ENCODE measurements at regions of chr3 and their contacts with region 1.

Region 1: DNA sequence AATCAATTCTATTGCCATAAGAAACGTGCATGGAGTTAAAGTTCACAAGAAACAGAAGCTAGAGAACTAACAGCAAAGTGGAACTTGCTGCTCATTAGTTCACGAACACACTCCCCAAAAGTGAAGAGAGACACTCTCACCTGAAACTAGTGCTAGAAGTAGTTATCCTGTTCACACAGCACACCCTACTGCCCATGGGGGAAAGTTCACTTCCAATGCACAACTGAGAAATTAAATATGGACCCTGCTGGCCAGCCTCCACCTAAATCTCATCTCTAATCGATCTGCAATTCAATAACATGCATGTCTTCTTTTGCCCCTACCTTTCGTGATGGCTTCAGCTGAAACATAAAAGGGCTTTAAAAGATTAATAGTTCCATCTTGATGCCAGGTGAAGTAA is 39.4 kb upstream of the FRMD4B start:
- DNase-seq: no peak

Region 2: GRCh38 chr3:69161587-69162307 is 263.5 kb before region 1 on chr3:
- intact Hi-C with region 1: loop called (anchors 5 kb)
- DNase-seq: no peak

Region 3: DNA sequence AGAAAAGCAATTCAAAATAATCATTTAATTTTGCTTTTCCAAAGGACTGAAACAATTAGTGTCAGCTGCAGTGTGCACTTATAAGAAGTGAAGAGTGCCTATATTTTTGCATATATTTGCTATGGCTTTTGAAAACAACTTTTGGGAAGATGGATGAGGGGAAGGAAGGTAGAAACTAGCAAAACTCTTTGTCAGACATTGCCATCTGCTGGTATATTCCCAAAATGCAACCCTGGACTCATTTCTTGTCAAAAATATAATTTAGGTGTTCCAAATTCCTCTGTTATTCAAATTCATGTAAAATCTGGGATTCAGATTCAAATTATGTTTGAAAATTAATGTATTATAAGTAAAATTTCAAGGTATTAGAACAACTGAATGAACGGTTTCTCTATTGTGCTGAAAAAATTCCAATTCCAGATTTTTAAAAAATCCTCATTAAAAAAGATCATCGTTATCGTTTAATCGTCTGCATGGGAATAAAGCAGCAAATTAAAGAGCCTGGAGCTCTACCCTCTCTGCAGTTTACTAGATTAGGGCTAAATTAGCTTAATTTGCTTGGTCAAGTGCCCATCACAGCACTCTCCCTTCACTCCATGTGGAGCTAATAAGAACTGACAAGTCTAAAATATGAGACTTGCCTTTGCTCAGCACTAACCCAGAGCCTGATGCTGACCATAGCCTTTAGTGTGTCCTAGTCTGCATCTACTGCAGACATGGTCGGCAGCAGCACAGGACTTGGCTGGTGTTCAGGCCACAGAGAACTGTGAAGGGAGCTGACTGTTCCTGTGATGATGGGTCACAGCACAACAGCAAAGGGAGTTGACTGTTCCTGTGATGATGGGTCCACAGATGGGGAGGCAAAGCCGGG is 246.1 kb after region 1 on chr3:
- intact Hi-C with region 1: loop called (anchors 5 kb)
- DNase-seq: no peak

Measured in cardiac septum (tissue), 1 donor.